WTC11 (cell line): ENCODE measurements at regions of chr17 and their contacts with region 1.

Region 1: DNA sequence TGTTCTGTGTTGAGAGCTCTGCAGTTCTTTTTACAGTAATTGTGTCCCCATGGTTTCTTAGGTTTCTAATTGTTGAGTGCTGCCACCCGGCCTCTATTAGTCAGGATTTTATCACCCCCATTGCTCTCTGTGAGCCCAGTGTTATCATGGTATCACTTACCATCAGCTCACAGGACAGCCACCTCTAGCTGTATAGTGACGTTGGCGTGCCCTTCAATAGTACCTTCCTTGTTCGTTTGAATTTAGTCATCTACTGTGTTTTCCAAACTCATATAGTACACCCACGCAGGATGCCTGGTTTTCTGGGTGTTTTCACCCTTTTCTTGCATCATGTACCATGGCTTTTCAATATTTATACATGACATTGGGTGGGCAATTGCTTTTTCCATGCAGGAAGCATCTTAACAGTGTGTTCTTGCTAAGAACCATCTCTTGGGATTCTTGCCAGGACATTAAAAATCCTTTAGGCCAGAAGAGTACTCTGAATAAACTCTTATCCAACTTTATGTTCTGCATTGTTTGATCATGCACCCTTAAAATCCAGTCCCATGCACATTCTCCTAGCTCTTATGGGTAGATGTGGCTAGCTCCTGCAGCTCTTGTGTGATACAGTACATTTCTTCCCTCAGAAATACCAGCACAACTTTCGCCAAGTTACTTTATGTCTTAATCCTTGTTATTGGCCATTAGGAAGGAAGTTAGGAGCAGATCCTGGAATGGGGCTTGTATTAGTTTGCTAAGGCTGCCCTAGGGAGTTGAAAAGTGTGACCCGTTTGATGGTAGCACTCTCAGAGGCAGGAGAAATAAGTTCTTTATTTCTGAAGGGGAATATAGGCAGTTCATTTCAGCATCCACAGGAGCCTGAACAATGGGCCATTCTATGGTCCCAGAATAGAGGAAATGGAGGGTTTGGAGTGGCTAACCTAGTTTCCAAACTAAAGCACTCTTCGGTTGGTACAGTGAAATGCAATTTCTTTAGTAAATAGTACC is 11.3 kb upstream of the ABCA10 start:
- DNase-seq: no peak
- ATAC-seq: no peak
- H3K4me3 Mint-ChIP-seq: no peak overlapping the region
- H3K27ac Mint-ChIP-seq: no peak overlapping the region
- H3K4me1 Mint-ChIP-seq: no peaks in the 10 kb centered on the region
- H3K27me3 Mint-ChIP-seq: no peaks in the 10 kb centered on the region
- CTCF ChIP-seq: no peak

Region 2: GRCh38 chr17:68771867-68772515 is 467.9 kb before region 1 on chr17:
- CTCF ChIA-PET with region 1: interaction called, 23 read pairs
- POLR2A ChIA-PET with region 1: interaction called, 3 read pairs
- DNase-seq: no peak
- ATAC-seq: peak; percentile 89
- H3K4me3 Mint-ChIP-seq: no peak overlapping the region
- H3K27ac Mint-ChIP-seq: no peak overlapping the region
- H3K4me1 Mint-ChIP-seq: no peaks in the 10 kb centered on the region
- H3K27me3 Mint-ChIP-seq: no peaks in the 10 kb centered on the region
- CTCF ChIP-seq: 0 out of 2 replicates have a peak, but pooled peaks have one; percentile 14

Region 3: DNA sequence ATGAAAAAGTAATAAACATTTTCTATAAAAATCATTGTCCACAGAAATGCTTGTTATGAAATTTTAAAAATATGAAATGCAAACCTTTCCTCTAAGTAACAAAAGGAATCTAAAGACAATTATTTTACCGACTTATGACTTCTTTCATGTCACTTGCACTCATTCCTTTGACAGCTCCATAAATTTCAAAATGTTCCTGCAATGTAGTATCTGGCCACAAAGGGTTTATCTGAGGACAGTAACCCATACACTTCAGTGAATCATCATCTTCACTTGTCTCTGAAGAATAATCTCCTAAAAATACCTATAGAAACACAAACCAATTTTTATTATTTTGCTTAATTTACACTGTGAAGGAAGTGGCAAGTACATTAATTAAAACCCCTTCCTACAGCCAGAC is 14.3 kb after region 1 on chr17:
- CTCF ChIA-PET with region 1: no interaction called
- POLR2A ChIA-PET with region 1: no interaction called
- DNase-seq: no peak
- ATAC-seq: no peak
- H3K4me3 Mint-ChIP-seq: no peak overlapping the region
- H3K27ac Mint-ChIP-seq: no peak overlapping the region
- H3K4me1 Mint-ChIP-seq: no peaks in the 10 kb centered on the region
- H3K27me3 Mint-ChIP-seq: no peaks in the 10 kb centered on the region
- CTCF ChIP-seq: no peak